PC-9 (cell line): ENCODE measurements at regions of chr3 and their contacts with region 1.

Region 1: GRCh38 chr3:50136714-50137405 is 18.3 kb upstream of the SEMA3F start:
- DNase-seq: no peak
- H3K4me3 ChIP-seq: no peak overlapping the region
- H3K27ac ChIP-seq: no peak overlapping the region
- H3K4me1 ChIP-seq: peaks cover 6% of the 10 kb centered on the region; the same call in 1 of the 2 replicates
- H3K27me3 ChIP-seq: no peaks in the 10 kb centered on the region
- CTCF ChIP-seq: no peak

Region 2: GRCh38 chr3:50192689-50193141 is 55.9 kb after region 1 on chr3:
- CTCF ChIA-PET with region 1: no interaction called
- POLR2A ChIA-PET with region 1: no interaction called
- intact Hi-C with region 1: no loop called
- DNase-seq: peak; percentile 47 to 78
- H3K4me3 ChIP-seq: no peak overlapping the region
- H3K27ac ChIP-seq: no peak overlapping the region
- H3K4me1 ChIP-seq: 0 out of 2 replicates have a peak, but pooled peaks cover 7% of the 10 kb centered on the region
- H3K27me3 ChIP-seq: no peaks in the 10 kb centered on the region
- CTCF ChIP-seq: peak; percentile 91

Region 3: DNA sequence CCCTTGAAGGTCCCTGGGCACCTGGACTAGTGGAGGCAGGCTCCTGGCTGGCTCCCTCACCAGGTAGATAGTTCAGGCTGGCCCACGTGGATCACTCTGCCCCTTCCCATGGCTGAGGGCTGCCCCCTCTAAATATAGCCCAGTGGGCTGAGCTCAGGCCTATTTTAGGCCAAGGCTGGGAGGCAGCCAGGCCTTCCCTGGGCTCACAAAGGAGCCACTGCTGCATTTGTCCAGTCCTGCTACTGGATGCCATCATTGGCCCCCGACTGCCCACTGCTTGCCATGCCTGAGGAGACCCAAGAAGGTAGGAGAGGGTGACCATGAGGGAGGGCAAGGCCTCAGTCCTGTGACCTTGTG is 142.0 kb after region 1 on chr3 and contains the start of gene LSMEM2:
- CTCF ChIA-PET with region 1: interaction called, 14 read pairs
- POLR2A ChIA-PET with region 1: no interaction called
- intact Hi-C with region 1: no loop called
- DNase-seq: no peak
- H3K4me3 ChIP-seq: no peak within 1 kb of the TSS
- H3K27ac ChIP-seq: no peak within 1 kb of the TSS
- H3K4me1 ChIP-seq: no peaks in the 10 kb centered on the region
- H3K27me3 ChIP-seq: no peaks in the 10 kb centered on the region
- CTCF ChIP-seq: no peak
- total RNA-seq, gene LSMEM2: 0.35 and 0.55 TPM in 2 replicates

Region 4: DNA sequence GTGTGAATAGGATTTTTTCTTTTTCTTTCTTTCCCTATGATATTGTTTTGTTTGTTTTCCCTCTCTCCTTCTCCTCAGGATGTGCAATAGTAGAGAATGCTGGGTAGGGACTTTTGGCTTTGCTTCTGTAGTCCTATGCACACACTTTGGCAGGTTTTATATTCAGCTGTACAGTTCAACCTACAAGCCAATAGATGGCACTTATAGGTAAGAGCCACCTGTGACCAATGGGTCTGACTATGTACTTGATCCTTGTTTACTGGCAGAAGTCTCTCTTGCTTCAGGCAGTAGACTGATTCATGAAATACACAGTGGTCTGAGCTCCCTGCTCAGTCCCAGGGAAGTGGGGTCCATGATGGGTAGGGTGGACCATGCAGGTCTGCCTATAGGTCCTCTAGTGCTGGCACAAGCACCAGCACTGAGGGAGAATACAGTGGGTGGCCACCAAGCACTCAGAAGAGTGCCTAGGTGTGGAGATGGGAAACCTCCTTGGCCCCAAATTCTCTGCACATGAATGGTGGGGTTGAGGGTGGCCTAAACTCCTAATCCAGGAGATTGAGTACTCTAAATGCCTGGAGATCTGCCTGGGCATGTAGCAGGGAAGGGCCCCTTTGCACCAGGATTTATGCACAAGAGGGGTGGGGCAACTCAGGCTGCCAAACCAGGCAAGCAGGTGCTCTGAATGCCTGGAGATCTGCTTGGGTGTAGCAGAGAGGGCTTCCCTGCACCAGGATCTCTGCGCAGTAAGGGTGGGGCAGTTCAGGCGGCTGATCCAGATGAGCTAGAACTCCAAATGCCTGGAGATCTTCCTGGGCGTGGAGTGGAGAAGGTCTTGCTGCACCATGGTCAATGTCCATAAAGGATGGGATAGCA is 714.0 kb after region 1 on chr3:
- CTCF ChIA-PET with region 1: no interaction called
- POLR2A ChIA-PET with region 1: no interaction called
- intact Hi-C with region 1: no loop called
- DNase-seq: no peak
- H3K4me3 ChIP-seq: no peak overlapping the region
- H3K27ac ChIP-seq: no peak overlapping the region
- H3K4me1 ChIP-seq: no peaks in the 10 kb centered on the region
- H3K27me3 ChIP-seq: no peaks in the 10 kb centered on the region
- CTCF ChIP-seq: no peak